Heart left ventricle (tissue), 16 donors: ENCODE measurements at regions of chr5 and their contacts with region 1.

Region 1: DNA sequence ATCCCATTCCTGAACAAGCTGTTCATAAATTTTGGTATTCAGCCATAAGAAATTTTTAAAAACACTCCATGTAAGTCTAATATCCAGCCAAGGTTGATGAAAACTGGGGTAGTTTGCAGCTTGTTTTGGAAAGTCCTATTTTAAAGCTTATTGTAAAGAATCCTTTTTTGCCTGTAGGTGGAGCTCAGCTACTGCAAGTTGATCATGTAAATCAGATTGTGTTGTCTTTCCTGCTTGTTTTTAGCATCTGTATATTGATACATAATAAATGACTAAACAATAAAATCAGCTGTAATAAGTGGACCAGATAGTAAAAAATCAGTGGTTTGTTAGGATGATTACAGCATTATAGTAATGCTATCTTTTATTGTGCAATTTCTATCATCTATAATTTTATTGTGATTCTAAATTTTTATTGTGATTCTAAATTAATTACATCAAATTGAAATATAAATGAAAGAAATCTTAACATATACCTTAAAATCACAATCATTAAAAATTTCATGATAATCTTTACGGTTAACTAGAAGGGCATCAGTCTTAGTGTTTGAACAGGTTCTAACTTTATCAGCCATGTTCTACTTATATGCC is 42.4 kb downstream of the CWC27 start:
- DNase-seq: no peak
- ATAC-seq: peak in 1 of 4 donors; percentile 57
- H3K4me3 ChIP-seq: no peak overlapping the region
- H3K27ac ChIP-seq: no peak overlapping the region
- H3K4me1 ChIP-seq: peaks cover 0 to 16% (median 5%) of the 10 kb centered on the region in 12 donors
- H3K27me3 ChIP-seq: no peaks in the 10 kb centered on the region
- CTCF ChIP-seq: peak; percentile 52 to 83 (median 70)
- POLR2A ChIP-seq: no peak

Region 2: DNA sequence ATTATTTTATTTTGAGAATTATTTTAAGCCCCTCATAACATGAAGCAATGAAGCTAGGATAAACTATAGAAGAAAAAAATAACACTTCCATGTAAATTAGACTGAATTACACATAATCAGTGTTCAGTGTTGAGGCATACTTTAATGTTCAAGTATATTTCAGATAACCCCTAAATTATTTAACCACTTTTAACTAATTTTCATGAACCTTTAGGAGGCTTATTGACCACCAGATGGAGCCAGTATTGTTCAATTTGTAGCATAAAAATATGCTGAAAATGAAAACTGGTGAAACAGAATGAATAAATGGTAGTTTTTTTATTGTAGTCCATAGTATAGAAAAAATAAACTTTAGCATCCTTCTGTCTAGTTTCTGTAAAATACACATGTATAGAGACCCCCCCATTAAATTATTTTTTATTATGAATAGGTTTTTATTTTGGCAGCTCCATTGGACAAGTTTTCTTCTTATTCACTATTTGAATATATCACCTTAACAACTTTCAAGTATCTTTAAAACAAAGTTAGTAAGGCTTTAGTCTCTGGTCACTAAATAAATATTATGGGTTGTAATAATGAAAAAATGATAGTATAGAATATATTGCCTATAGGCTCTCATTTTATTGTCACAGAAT is 147.7 kb after region 1 on chr5:
- intact Hi-C with region 1: loop called in 6 of 10 experiments (anchors 5 to 10 kb)
- DNase-seq: no peak
- ATAC-seq: no peak
- H3K4me3 ChIP-seq: no peak overlapping the region
- H3K27ac ChIP-seq: no peak overlapping the region
- H3K4me1 ChIP-seq: no peaks in the 10 kb centered on the region
- H3K27me3 ChIP-seq: no peaks in the 10 kb centered on the region
- CTCF ChIP-seq: peak; percentile 30 to 73 (median 59)
- POLR2A ChIP-seq: no peak

Region 3: GRCh38 chr5:65133477-65134110 is 322.4 kb after region 1 on chr5:
- intact Hi-C with region 1: no loop called
- DNase-seq: no peak
- ATAC-seq: peak; percentile 56 to 83 (median 61)
- H3K4me3 ChIP-seq: no peak overlapping the region
- H3K27ac ChIP-seq: peak overlapping the region in 4 of 12 donors; percentile 28 to 65 (median 41)
- H3K4me1 ChIP-seq: peaks cover 0 to 19% (median 3%) of the 10 kb centered on the region in 12 donors
- H3K27me3 ChIP-seq: no peaks in the 10 kb centered on the region
- CTCF ChIP-seq: no peak
- POLR2A ChIP-seq: no peak

Region 4: DNA sequence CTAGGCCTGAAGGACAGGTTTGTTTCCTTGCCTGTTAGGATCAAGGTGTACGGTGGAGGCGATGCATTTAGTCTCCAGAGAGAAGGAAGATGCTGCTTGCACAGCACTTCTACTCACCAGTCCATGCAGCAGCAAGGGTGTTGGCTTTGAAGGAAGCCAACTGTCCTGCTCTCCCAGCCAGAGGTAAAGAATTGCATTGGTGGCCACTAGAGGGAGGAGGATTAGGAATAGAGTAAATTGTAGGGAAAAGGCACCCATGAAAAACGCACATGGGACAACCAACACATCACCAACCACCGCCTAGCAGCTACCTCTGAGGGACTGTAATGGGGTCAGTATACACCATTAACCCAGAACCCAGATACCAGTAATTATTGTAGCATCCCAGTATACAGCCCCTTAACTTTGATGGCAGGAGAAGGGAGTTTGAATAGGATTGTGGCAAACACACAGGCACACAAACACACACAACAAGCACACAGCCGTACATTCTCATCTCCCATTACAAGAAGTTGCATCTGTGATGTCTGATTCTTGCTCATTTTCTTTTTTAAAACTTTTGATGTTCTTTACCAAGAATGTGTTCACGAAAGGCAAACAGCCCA is 402.9 kb after region 1 on chr5:
- intact Hi-C with region 1: loop called in 2 of 10 experiments (anchors 10 kb)
- DNase-seq: peak in 1 of 5 donors; percentile 6
- ATAC-seq: peak in 3 of 4 donors; percentile 48 to 70 (median 52)
- H3K4me3 ChIP-seq: no peak overlapping the region
- H3K27ac ChIP-seq: no peak overlapping the region
- H3K4me1 ChIP-seq: no peaks in the 10 kb centered on the region
- H3K27me3 ChIP-seq: no peaks in the 10 kb centered on the region
- CTCF ChIP-seq: peak in 11 of 12 donors; percentile 32 to 60 (median 39)
- POLR2A ChIP-seq: no peak

Region 5: DNA sequence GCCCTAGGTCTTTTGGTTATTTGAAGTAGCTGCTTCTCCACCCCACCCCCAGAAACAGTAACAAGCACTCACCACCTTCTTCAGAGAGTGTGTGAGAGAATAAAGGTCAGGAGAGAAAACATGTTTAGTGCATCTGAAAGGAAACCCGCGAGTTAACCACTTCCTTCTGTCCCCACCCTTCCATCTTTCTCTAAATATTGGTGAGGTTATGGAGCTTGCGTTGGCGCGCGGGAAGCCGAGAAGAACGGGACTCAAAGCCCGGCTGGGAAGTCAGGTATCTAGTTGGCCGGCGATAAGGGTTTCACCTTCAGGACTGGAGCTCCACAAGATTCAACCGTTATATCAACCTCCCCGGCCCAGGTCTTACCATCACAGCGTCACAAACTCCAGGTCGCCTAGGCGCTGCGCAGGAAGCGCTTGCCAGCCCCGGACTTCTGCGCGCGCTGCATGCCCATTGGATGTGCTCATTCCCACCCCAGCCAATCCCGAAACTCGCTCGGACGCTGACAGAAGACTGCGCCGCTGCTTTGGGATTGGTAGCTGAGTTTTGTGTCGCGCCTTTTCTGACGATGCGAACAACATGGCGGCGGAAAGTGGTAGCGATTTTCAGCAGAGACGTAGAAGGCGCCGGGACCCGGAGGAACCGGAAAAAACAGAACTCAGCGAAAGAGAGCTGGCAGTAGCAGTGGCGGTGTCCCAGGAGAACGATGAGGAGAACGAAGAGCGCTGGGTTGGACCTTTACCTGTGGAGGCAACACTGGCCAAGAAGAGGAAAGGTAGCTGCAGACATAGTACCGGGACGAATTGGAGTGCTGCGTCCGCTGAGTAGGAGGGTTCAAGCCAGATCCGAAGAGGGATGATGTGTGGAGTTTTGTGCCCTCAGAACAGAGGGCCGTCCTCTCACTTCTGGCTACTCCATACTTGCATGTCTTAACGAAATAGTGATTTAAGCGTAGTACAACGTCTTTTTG is 751.9 kb after region 1 on chr5 and contains the starts of genes CENPK and PPWD1:
- intact Hi-C with region 1: loop called in 2 of 10 experiments (anchors 10 kb)
- DNase-seq: peak; percentile 93 to 96 (median 94)
- ATAC-seq: peak; percentile 99 to 100 (median 100)
- H3K4me3 ChIP-seq: peak within 1 kb of the TSS; percentile 59 to 96 (median 86)
- H3K27ac ChIP-seq: peak within 1 kb of the TSS; percentile 37 to 94 (median 86)
- H3K4me1 ChIP-seq: peaks cover 0 to 33% (median 23%) of the 10 kb centered on the region in 12 donors
- H3K27me3 ChIP-seq: no peaks in the 10 kb centered on the region
- CTCF ChIP-seq: no peak
- POLR2A ChIP-seq: peak in 1 of 2 donors; percentile 58
- total RNA-seq, gene CENPK: 0.32 to 6.9 (median 0.79) TPM in 7 of 9 donors, not detected in the others
- total RNA-seq, gene PPWD1: 13.4 to 20.1 (median 16.1) TPM